ENCODE measurements at regions of chr20 and their contacts with region 1.

Region 1: DNA sequence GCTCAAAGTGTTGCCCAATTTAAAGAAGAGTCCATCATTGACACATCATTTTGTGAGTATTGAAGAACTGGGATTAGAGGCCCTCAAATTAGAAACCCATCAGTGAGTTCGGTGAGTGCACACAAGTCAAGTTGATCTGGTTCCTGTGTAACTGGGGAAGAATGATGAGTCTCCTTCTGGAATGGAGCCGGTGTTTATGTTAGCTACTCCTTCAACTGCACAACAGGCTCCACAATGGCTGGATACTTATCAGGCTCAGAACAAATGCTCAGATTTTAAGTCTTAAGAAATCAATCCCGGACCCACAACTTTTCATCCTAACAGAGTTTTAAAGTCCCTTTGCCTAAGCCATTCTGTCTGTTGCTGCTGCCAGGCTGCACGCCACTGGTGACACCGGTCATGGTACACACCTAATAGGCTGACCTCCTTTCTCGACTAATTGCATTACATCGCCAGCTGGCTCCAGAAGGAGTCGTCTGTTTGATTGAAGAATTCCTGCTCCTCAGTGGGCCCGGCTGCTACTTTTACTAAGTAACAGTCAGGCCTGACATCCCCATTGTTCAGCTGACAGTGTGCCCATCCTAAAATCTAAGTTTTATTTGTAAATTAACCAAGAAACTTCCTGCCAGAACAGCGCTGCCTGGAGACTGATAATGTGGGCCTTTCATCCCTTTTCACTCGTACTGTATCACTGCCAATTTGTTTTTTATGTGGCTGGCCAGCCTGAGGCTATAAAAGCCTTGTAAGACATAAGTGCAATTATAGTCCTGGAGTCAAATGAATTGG is 130.4 kb downstream of the INSM1 start:
- DNase-seq: no peak
- H3K4me3 Mint-ChIP-seq: no peak overlapping the region
- H3K27ac Mint-ChIP-seq: peak overlapping the region; percentile 82
- H3K4me1 Mint-ChIP-seq: peaks cover 66% of the 10 kb centered on the region
- H3K27me3 Mint-ChIP-seq: no peaks in the 10 kb centered on the region

Region 2: GRCh38 chr20:20070871-20071726 is 427.2 kb before region 1 on chr20:
- intact Hi-C with region 1: no loop called
- DNase-seq: no peak
- H3K4me3 Mint-ChIP-seq: no peak overlapping the region
- H3K27ac Mint-ChIP-seq: no peak overlapping the region
- H3K4me1 Mint-ChIP-seq: no peaks in the 10 kb centered on the region
- H3K27me3 Mint-ChIP-seq: no peaks in the 10 kb centered on the region

Region 3: DNA sequence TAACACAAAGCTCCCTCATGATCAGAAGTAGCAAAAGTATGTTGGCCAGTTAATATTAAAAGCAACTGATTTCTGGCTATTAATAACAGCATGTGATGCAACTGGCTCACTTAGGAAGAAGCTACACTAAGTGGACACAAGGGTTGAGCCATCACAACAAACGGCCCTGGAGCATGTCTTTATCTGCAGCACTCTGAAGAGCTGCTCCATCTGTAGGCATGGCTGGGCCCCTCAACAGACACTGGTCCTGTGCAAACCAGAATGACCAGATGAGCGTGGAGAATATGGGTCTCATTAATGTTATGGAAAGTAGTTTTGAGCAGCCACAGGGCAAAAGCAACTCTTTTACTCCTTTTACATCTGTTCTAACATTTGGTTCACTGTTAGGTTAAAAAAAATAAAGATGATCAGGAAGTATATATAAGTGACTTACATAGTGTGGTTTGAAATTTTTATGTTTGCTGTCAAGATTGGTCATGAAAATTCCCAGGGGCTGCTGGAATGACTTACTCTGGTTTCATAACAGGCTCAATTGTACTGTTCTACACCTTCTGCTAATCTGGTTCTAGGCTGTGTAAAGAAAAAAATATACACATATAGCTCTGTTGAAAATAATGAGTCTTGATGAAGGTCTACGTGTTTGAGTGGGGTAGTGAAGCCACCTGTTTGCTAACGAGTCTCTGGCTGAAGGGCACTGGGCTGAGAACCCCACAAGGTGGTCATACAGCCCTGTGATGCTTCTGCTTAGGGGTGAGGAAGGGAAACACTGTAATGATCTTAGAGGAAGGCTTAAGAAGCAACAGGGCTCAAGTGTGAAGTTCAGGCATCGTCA is 72.2 kb before region 1 on chr20:
- intact Hi-C with region 1: loop called (anchors 2 kb)
- DNase-seq: no peak
- H3K4me3 Mint-ChIP-seq: no peak overlapping the region
- H3K27ac Mint-ChIP-seq: peak overlapping the region; percentile 87
- H3K4me1 Mint-ChIP-seq: peaks cover 47% of the 10 kb centered on the region
- H3K27me3 Mint-ChIP-seq: no peaks in the 10 kb centered on the region

Region 4: GRCh38 chr20:20480689-20481088 is 17.6 kb before region 1 on chr20:
- intact Hi-C with region 1: loop called (anchors 2 kb)
- DNase-seq: no peak
- H3K4me3 Mint-ChIP-seq: peak overlapping the region; percentile 19
- H3K27ac Mint-ChIP-seq: peak overlapping the region; percentile 81
- H3K4me1 Mint-ChIP-seq: peaks cover 43% of the 10 kb centered on the region
- H3K27me3 Mint-ChIP-seq: no peaks in the 10 kb centered on the region

Region 5: DNA sequence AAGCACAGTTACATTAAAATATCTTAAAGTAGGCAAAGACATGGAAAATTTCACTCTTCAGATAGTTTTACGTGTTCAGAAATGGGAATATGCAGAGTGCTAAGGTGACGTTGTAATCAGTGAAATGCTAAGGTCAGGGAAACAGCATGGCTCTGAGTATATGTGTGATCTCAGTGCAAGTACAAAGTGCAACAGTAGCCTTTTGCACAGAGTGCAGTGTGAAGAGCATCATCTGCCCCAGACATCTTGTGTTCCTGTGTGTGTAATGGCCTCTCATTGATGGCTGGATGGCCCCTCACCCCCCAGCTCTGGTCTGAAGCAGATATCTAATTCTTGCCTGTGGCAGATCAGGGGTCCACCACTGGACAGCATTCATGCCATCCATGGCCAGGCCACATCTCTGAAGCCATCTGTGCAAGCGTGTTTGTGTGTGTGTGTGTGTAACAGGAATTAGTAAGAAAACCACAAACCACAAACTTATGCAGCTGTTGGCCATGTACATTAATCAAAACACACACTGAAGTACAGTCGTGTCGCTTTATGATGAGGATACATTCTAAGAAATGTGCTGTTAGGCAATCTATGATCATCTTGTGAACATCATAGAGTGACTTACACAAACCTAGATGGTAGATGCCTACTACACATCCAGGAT is 49.1 kb after region 1 on chr20:
- intact Hi-C with region 1: loop called (anchors 2 kb)
- DNase-seq: no peak
- H3K4me3 Mint-ChIP-seq: no peak overlapping the region
- H3K27ac Mint-ChIP-seq: no peak overlapping the region
- H3K4me1 Mint-ChIP-seq: peaks cover 34% of the 10 kb centered on the region
- H3K27me3 Mint-ChIP-seq: no peaks in the 10 kb centered on the region

Region 6: DNA sequence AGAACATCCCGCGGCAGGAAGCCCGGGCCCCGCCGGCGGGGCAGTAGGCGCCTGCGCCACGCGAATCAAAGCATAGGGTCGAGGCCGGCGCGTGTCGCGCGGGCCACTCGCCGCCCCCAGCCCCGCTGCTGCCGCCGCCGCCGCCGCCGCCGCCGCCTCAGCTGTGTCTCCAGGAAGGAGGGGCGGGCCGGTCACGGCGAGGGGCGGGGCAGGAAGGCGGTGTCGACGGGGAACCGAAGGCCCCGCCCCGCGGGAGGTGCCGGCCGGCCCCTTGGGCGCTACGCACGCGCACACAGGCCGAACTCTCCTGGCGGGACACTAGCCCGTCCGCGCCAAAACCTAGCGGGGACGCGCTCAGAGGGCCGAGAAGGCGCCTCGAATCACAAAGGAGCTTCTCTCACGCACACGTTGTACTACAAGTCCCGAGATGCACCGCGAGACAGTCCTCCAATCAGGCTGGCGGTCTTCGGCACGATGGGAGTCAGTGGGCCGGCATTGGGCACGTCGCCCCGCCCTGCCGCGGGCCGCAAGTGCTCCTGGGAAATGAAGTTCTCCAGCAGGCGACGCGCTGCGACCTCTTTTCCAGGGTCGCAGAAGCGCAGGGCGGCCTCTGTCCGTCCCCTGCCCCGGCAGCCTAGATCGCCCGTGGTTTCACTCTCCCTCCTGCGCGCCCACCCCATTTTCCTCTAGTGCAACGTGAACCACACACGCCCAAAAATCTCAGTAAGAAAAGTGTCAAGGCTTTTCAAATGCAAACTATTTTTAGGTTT is 214.4 kb after region 1 on chr20 and contains the start of gene RALGAPA2:
- intact Hi-C with region 1: loop called (anchors 5 kb)
- DNase-seq: peak; percentile 92
- H3K4me3 Mint-ChIP-seq: peak within 1 kb of the TSS; percentile 87
- H3K27ac Mint-ChIP-seq: peak within 1 kb of the TSS; percentile 86
- H3K4me1 Mint-ChIP-seq: peaks cover 27% of the 10 kb centered on the region
- H3K27me3 Mint-ChIP-seq: no peaks in the 10 kb centered on the region
- total RNA-seq, gene RALGAPA2: 22.1 and 25.0 TPM in 2 replicates